Aorta (tissue), 5 donors: ENCODE measurements at regions of chr16 and their contacts with region 1.

Region 1: DNA sequence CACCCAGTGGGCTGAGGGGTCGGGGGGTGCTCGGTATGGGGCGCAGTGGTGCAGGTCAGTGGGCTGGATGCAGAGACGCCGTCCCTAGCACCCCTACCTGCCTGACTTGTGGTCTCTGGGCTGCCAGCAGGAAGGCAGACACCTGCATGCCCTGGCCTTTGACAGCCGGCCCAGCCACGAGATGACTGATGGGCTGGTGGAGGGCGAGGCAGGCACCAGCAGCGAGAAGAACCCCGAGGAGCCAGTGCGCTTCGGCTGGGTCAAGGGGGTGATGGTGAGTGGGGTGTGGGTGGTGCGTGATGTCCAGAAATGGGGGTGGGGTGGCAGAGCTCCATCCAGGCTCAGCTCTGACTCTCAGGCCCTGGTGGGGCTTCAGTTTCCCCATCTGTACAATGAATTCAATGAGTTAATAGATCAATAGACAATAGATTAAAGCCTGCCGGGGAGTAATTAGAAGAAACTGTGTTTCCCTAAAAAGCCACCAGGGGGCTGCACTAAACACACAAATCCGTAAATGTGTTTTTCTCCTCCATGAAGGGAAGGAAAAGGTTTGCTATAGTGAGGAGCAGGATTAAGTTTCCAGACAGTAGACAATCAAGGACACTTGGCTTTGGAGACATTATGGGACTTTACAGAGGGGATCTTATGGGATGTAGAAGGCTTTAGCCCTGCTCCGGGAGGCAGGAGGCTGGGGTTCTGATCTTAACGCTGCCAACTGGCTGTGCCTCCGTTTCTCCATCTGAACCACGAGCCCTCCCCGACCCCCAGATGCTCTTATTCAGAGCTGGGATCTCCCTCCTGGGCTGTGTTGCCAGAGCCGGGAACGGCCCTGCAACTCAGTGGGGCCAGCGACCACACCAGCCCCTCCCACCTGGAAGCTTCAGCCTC is 2.2 kb downstream of the SLC12A3 start:
- DNase-seq: no peak
- ATAC-seq: peak; percentile 72
- H3K4me3 ChIP-seq: no peak overlapping the region
- H3K27ac ChIP-seq: no peak overlapping the region
- H3K4me1 ChIP-seq: no peaks in the 10 kb centered on the region
- H3K27me3 ChIP-seq: no peaks in the 10 kb centered on the region

Region 2: GRCh38 chr16:56841233-56841632 is 26.0 kb before region 1 on chr16:
- intact Hi-C with region 1: no loop called
- DNase-seq: no peak
- ATAC-seq: no peak
- H3K4me3 ChIP-seq: no peak overlapping the region
- H3K27ac ChIP-seq: no peak overlapping the region
- H3K4me1 ChIP-seq: no peaks in the 10 kb centered on the region
- H3K27me3 ChIP-seq: no peaks in the 10 kb centered on the region

Region 3: DNA sequence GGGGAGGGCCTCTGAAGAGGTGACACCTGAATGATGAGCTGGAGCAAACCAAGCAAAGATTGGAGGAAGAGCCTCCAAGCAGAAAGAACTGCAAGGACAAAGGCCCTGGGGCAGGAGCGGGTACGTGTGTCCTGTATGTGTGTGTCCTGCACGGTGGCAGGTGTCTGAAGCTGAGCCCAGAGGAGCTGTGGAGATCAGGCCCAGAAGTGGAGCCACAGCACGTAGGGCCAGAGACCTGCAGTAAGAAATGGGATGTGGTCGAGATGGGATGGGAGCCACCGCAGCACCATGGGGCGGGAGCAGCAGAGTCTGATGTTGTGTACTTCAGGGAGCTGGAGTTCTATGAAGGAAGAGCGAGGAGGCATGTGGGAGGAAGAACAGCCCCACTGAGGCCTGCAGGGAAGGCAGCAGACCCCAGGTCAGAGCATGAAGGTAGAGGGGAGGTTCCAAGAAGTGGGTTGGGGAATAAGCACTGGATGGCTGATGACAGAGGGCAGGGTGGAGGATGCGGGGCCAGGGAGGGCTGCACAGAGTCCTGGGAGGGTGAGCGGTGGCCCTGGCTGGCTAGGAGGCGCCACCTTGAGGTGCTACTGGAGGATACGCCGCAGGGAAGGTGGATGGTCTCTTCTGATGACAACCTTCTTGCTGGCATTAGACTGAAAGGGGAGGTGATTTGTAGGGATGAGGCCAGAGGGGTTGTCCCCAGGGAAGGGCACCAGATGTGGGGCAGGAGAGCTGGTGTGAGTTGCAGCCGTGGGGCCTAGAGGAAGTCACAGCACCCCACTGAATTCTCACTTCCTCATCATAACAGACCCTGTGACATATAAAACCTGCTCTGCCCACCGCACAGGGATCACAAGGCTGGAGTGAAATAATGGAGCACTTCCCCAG is 83.9 kb after region 1 on chr16:
- intact Hi-C with region 1: loop called (anchors 5 kb)
- DNase-seq: peak; percentile 80 to 83
- ATAC-seq: peak; percentile 64
- H3K4me3 ChIP-seq: no peak overlapping the region
- H3K27ac ChIP-seq: no peak overlapping the region
- H3K4me1 ChIP-seq: no peaks in the 10 kb centered on the region
- H3K27me3 ChIP-seq: no peaks in the 10 kb centered on the region

Region 4: DNA sequence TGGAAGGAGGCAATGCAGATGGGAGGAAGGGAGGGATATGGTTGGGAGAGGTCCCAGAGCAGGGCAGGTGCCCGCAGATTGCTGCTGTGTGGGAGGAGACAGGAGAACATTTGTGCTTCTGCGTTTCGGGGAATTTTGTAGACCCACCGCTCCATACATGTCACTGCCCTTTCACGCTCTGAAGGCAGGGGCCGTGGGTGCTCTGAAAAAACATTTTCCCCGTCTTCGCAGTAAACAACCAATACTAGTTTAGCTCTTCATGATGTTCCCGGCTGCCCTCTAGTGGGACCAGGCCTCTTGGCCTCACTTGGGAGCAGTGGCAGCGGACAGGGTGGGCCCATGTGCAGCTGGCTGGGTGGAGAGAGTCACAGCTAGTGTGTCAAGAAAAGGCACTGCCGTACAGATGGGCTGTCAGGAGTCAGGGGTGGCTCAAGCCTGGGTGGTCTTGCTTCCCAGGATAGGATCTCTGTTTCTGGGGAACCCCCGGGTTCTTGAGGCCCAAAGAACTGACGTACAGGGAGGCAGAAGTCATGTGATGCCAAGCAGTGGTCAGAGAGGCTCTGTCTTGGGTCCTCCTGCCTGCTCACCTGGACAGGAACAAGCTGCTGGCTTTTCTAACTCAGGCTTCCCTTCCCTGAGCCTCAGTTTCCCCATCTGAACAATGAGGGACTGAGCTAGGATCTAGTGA is 178.7 kb after region 1 on chr16:
- intact Hi-C with region 1: loop called (anchors 5 kb)
- DNase-seq: peak; percentile 84 to 91
- ATAC-seq: peak; percentile 82
- H3K4me3 ChIP-seq: no peak overlapping the region
- H3K27ac ChIP-seq: no peak overlapping the region
- H3K4me1 ChIP-seq: no peaks in the 10 kb centered on the region
- H3K27me3 ChIP-seq: no peaks in the 10 kb centered on the region

Region 5: DNA sequence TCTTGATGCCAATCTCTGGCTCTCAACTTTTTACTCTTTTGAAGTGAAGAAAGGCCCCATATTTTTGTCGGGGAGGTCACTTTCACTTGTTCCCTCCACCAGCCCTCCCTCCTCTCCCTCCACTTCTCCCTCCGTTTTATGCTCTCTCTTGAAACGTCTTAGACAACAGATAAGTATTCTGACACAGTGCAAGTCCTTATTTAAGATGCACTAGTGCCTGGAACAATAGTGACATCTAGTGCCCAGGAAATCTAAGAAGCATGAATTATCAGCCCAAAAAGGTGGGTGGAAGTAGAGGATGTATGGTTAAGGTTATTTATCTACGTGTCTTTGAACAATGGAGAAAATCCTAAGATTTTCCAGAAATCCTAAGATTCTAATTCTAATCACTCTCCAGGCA is 300.8 kb after region 1 on chr16:
- intact Hi-C with region 1: loop called in 1 of 2 experiments (anchors 5 kb)
- DNase-seq: no peak
- ATAC-seq: peak; percentile 76
- H3K4me3 ChIP-seq: no peak overlapping the region
- H3K27ac ChIP-seq: no peak overlapping the region
- H3K4me1 ChIP-seq: no peaks in the 10 kb centered on the region
- H3K27me3 ChIP-seq: no peaks in the 10 kb centered on the region